Activated CD4-positive, alpha-beta T cell treated with anti-CD3 and anti-CD28 coated beads for 36 hours (primary cell): ENCODE measurements at regions of chr3 and their contacts with region 1.

Region 1: DNA sequence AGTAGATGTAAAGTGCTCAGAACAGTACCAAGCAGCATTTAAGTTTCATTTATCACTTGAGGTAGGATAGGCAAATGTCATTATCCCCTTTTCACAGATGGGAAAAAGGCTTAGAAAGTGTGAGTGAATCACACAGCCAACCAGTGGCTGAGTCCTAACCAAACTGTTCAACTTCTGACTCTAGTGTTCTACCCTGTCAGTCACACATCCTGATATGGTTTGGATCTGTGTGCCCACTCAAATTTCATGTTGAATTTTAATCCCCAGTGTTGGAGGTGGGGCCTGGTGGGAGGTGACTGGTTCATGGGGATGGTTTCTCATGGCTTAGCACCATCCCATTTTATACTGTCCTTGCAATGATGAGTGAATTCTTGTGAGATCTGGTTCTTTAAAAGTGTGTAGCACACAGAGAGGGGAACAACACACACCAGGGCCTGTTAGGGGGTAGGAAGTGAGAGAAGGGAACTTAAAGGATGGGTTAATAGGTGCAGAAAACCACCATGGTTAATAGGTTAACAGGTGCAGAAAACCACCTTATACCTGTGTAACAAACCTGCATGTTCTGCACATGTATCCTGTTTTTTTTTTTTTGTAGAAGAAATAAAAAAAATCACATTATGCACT is 304.7 kb downstream of the SUCLG2 start:
- DNase-seq: peak; percentile 67
- ATAC-seq: peak; percentile 94
- H3K4me3 Mint-ChIP-seq: no peak overlapping the region
- H3K27ac Mint-ChIP-seq: no peak overlapping the region
- H3K4me1 Mint-ChIP-seq: peaks cover 17% of the 10 kb centered on the region
- H3K27me3 Mint-ChIP-seq: peaks cover 10% of the 10 kb centered on the region

Region 2: GRCh38 chr3:66394019-66394752 is 955.5 kb before region 1 on chr3:
- CTCF ChIA-PET with region 1: no interaction called
- POLR2A ChIA-PET with region 1: no interaction called
- intact Hi-C with region 1: no loop called
- DNase-seq: peak; percentile 45
- ATAC-seq: peak; percentile 90
- H3K4me3 Mint-ChIP-seq: peak overlapping the region; percentile 13
- H3K27ac Mint-ChIP-seq: peak overlapping the region; percentile 80
- H3K4me1 Mint-ChIP-seq: peaks cover 32% of the 10 kb centered on the region
- H3K27me3 Mint-ChIP-seq: no peaks in the 10 kb centered on the region

Region 3: GRCh38 chr3:67104388-67104787 is 245.3 kb before region 1 on chr3:
- CTCF ChIA-PET with region 1: no interaction called
- POLR2A ChIA-PET with region 1: no interaction called
- intact Hi-C with region 1: no loop called
- DNase-seq: no peak
- ATAC-seq: no peak
- H3K4me3 Mint-ChIP-seq: no peak overlapping the region
- H3K27ac Mint-ChIP-seq: no peak overlapping the region
- H3K4me1 Mint-ChIP-seq: no peaks in the 10 kb centered on the region
- H3K27me3 Mint-ChIP-seq: peaks cover 3% of the 10 kb centered on the region

Region 4: GRCh38 chr3:67329358-67329757 is 20.3 kb before region 1 on chr3:
- CTCF ChIA-PET with region 1: no interaction called
- POLR2A ChIA-PET with region 1: no interaction called
- intact Hi-C with region 1: loop called (anchors 1 kb)
- DNase-seq: peak; percentile 69
- ATAC-seq: peak; percentile 96
- H3K4me3 Mint-ChIP-seq: no peak overlapping the region
- H3K27ac Mint-ChIP-seq: no peak overlapping the region
- H3K4me1 Mint-ChIP-seq: peaks cover 19% of the 10 kb centered on the region
- H3K27me3 Mint-ChIP-seq: peaks cover 14% of the 10 kb centered on the region

Region 5: DNA sequence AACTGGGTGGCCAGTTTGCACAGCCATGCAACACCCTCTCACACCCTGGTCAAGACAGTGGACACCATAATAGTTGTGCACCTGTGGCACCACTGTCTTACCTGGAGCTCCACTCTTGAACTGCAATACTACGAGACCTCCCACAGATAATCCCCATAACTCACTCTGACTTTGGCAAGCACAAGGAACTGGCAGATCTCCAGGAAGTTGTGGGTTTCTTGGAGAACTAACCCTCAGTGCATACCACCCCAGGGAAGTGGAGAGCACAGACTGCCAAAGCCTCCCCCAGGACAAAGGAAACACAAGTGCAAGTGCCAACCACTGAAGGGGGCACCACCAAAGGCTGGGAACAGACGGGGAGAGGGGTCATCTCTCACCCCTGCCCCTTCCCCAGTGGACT is 13.8 kb before region 1 on chr3:
- CTCF ChIA-PET with region 1: no interaction called
- POLR2A ChIA-PET with region 1: no interaction called
- intact Hi-C with region 1: loop called (anchors 1 to 2 kb)
- DNase-seq: no peak
- ATAC-seq: no peak
- H3K4me3 Mint-ChIP-seq: no peak overlapping the region
- H3K27ac Mint-ChIP-seq: no peak overlapping the region
- H3K4me1 Mint-ChIP-seq: peaks cover 7% of the 10 kb centered on the region
- H3K27me3 Mint-ChIP-seq: peaks cover 14% of the 10 kb centered on the region

Region 6: DNA sequence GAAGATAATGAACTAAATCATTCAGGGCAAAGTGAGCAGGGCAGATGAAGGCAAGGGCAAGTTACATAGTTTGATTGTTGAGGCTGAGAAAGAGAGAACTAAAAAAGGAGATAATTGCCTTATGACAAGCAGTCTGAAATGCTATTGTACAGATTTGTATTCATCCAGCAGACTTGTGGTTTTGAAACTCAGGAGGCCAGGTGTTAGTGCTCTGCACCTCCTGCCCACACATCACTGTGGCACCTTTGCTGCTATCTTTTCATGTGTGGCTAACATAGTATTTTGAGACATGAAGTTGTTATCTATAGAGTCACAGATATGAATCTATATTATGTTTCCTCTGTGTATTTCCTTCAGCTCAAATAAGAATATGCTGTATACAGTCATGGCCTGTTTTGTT is 329.0 kb after region 1 on chr3:
- CTCF ChIA-PET with region 1: no interaction called
- POLR2A ChIA-PET with region 1: no interaction called
- intact Hi-C with region 1: no loop called
- DNase-seq: peak; percentile 38
- ATAC-seq: peak; percentile 80
- H3K4me3 Mint-ChIP-seq: no peak overlapping the region
- H3K27ac Mint-ChIP-seq: no peak overlapping the region
- H3K4me1 Mint-ChIP-seq: peaks cover 24% of the 10 kb centered on the region
- H3K27me3 Mint-ChIP-seq: no peaks in the 10 kb centered on the region